GM23248 (cell line): ENCODE measurements at regions of chr3 and their contacts with region 1.

Region 1: GRCh38 chr3:16056210-16056607 is 118.3 kb upstream of the GALNT15 start:
- DNase-seq: peak; percentile 68
- H3K4me3 ChIP-seq: peak overlapping the region; percentile 56; the same call in 1 of the 2 replicates
- H3K27ac ChIP-seq: peak overlapping the region; percentile 58
- H3K4me1 ChIP-seq: peaks cover 60% of the 10 kb centered on the region
- H3K27me3 ChIP-seq: no peaks in the 10 kb centered on the region

Region 2: GRCh38 chr3:16177962-16178627 is 121.9 kb after region 1 on chr3:
- in situ Hi-C with region 1: loop called (anchors 10 kb)
- DNase-seq: peak; percentile 95
- H3K4me3 ChIP-seq: peak overlapping the region; percentile 67
- H3K27ac ChIP-seq: 0 out of 2 replicates have a peak overlapping the region, but pooled peaks have one; percentile 10
- H3K4me1 ChIP-seq: peaks cover 82% of the 10 kb centered on the region
- H3K27me3 ChIP-seq: no peaks in the 10 kb centered on the region